ENCODE measurements at regions of chr15 and their contacts with region 1.

Region 1: GRCh38 chr15:25508369-25509002 is 69.7 kb upstream of the UBE3A start:
- DNase-seq: peak; percentile 72
- H3K4me3 ChIP-seq: no peak overlapping the region
- H3K27ac ChIP-seq: no peak overlapping the region
- H3K4me1 ChIP-seq: peaks cover 11% of the 10 kb centered on the region
- H3K27me3 ChIP-seq: no peaks in the 10 kb centered on the region

Region 2: GRCh38 chr15:25345943-25346342 is 162.5 kb before region 1 on chr15:
- in situ Hi-C with region 1: no loop called
- DNase-seq: peak; percentile 41
- H3K4me3 ChIP-seq: no peak overlapping the region
- H3K27ac ChIP-seq: no peak overlapping the region
- H3K4me1 ChIP-seq: peaks cover 5% of the 10 kb centered on the region; the same call in 1 of the 2 replicates
- H3K27me3 ChIP-seq: no peaks in the 10 kb centered on the region

Region 3: GRCh38 chr15:25910832-25911231 is 402.3 kb after region 1 on chr15:
- in situ Hi-C with region 1: no loop called
- DNase-seq: no peak
- H3K4me3 ChIP-seq: no peak overlapping the region
- H3K27ac ChIP-seq: no peak overlapping the region
- H3K4me1 ChIP-seq: peaks cover 1% of the 10 kb centered on the region
- H3K27me3 ChIP-seq: no peaks in the 10 kb centered on the region

Region 4: DNA sequence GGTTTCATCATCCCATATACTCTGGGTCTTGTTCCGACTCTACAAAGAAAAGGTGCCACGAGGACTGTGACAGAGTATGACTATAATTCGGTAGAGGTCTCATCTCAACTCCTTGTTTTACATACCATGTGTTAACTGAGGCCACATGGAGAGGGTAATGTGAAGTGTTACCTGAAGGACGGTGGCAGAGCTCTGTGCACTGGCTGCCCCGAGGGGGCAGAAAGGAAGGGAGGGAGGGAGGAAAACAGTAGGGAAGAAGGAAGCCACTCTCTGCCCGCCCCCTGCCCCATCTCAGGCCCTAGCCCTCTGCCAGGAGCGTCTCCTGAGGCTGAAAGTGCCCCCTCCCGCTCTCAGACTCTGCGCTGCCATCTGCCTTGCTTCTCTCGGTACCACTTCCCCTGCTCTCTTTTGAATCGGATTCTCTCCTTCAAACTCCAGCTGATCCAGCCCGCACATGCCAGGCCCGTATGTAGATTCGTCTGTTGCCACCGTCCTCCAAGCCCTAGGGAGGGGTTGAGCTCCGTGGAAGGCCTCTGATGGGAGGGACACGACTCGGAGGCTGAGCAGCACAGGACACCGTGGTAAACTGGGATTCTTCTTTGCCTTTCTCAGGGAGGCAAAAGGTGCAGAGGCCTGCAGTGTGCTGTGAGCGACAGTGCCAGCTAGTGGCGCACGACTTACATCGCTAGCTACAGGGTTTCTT is 425.1 kb after region 1 on chr15:
- in situ Hi-C with region 1: loop called (anchors 25 kb)
- DNase-seq: peak; percentile 94
- H3K4me3 ChIP-seq: peak overlapping the region; percentile 62
- H3K27ac ChIP-seq: peak overlapping the region; percentile 49
- H3K4me1 ChIP-seq: peaks cover 13% of the 10 kb centered on the region
- H3K27me3 ChIP-seq: no peaks in the 10 kb centered on the region

Region 5: GRCh38 chr15:26260517-26261133 is 752.1 kb after region 1 on chr15:
- in situ Hi-C with region 1: loop called (anchors 25 kb)
- DNase-seq: peak; percentile 58
- H3K4me3 ChIP-seq: no peak overlapping the region
- H3K27ac ChIP-seq: no peak overlapping the region
- H3K4me1 ChIP-seq: no peaks in the 10 kb centered on the region
- H3K27me3 ChIP-seq: no peaks in the 10 kb centered on the region; the same call in 1 of the 2 replicates

Region 6: GRCh38 chr15:26864664-26865191 is 1356.2 kb after region 1 on chr15:
- in situ Hi-C with region 1: loop called (anchors 25 kb)
- DNase-seq: peak; percentile 73
- H3K4me3 ChIP-seq: no peak overlapping the region
- H3K27ac ChIP-seq: no peak overlapping the region
- H3K4me1 ChIP-seq: 0 out of 2 replicates have a peak, but pooled peaks cover 4% of the 10 kb centered on the region
- H3K27me3 ChIP-seq: peaks cover 40% of the 10 kb centered on the region

Measured in GM23248 (cell line).